Activated CD4-positive, alpha-beta memory T cell treated with anti-CD3 and anti-CD28 coated beads, Interleukin-2, amount 10 ng/mL, durations not matched to agents 7 days and 5 days (primary cell): ENCODE measurements at regions of chr1 and their contacts with region 1.

Region 1: DNA sequence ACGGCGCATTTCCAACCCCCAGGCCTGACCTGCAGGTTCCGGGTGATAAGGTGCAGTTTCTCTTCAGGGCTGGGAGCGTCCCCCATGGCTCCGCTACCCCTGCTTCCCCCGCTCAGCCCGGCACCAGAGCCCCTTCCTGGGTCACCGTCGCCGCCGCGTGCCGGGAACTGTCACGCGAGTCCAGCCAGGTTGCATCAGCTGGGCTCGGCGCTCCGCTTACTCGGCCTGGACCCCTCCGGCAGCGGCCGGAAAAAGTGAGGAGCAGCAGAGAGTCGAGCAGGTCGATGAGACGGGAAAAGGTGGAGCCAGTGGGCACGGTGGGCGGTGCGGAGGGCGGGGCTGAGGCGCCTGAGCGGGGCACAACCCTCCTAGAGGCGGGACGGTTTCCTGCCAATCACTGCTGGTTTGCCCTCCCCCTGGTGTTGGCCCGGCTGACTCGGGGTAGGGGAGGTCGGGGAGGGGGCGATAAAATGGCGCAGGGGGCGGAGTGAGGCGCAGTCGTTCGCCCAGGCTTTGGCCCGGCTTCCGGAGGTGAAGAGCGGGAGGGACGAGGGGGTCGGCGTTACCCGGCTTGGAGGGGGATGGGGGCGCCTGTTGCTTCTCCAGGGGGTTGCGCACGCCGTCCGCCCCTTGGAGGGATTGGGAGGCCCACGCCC is at the starts of genes S100PBP and YARS1:
- DNase-seq: peak; percentile 100
- H3K4me3 Mint-ChIP-seq: peak within 1 kb of the TSS; percentile 93
- H3K27ac Mint-ChIP-seq: peak within 1 kb of the TSS; percentile 89
- H3K4me1 Mint-ChIP-seq: peaks cover 54% of the 10 kb centered on the region
- H3K27me3 Mint-ChIP-seq: no peaks in the 10 kb centered on the region
- total RNA-seq, gene S100PBP: 78.4 to 84.0 TPM
- total RNA-seq, gene YARS1: 204 to 214 TPM

Region 2: DNA sequence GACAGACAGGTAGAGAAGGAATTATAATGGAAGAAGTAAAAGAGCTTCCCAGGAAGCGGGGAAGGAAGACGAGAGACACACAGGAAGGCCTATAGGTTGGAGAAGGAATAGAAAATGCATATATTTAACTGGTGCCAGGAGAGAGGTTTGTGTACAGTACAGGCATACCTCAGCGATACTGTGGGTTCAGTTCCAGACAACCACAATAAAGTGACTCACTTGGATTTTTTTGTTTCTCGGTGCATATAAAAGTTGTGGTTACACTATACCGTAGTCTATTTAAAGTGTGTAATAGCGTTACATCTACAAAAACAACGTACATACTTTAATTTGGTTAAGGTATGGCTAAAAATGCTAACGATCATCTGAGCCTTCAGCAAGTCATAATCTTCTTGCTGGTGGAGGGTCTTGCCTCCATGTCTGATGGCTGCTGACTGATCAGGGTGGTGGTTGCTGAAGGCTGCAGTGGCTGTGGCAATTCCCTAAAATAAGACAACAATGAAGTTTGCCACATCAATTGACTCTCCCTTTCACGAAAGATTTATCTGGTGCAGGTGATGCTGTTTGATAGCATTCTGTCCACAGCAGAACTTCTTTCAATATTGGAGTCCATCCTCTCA is 16.1 kb before region 1 on chr1:
- CTCF ChIA-PET with region 1: interaction called, 4 read pairs
- POLR2A ChIA-PET with region 1: interaction called, 47 read pairs
- DNase-seq: peak; percentile 43
- H3K4me3 Mint-ChIP-seq: peak overlapping the region; percentile 12
- H3K27ac Mint-ChIP-seq: peak overlapping the region; percentile 76
- H3K4me1 Mint-ChIP-seq: peaks cover 54% of the 10 kb centered on the region
- H3K27me3 Mint-ChIP-seq: no peaks in the 10 kb centered on the region